Tibial artery (tissue), 4 donors: ENCODE measurements at regions of chr11 and their contacts with region 1.

Region 1: GRCh38 chr11:72947229-72947628 is 133.0 kb downstream of the ATG16L2 start:
- DNase-seq: no peak
- H3K4me3 ChIP-seq: no peak overlapping the region
- H3K27ac ChIP-seq: no peak overlapping the region
- H3K4me1 ChIP-seq: peaks cover 0 to 15% (median 2%) of the 10 kb centered on the region in 4 donors
- H3K27me3 ChIP-seq: no peaks in the 10 kb centered on the region
- CTCF ChIP-seq: no peak

Region 2: GRCh38 chr11:72962084-72962483 is 14.9 kb after region 1 on chr11:
- intact Hi-C with region 1: loop called (anchors 2 kb)
- DNase-seq: no peak
- H3K4me3 ChIP-seq: no peak overlapping the region
- H3K27ac ChIP-seq: no peak overlapping the region
- H3K4me1 ChIP-seq: no peaks in the 10 kb centered on the region
- H3K27me3 ChIP-seq: no peaks in the 10 kb centered on the region
- CTCF ChIP-seq: no peak